ENCODE measurements at regions of chr10 and their contacts with region 1.

Region 1: GRCh38 chr10:94641480-94641879 is 42.0 kb upstream of the CYP2C18 start:
- DNase-seq: no peak
- H3K4me3 ChIP-seq: no peak overlapping the region
- CTCF ChIP-seq: no peak

Region 2: GRCh38 chr10:94630017-94630688 is 11.3 kb before region 1 on chr10:
- CTCF ChIA-PET with region 1: interaction called, 11 read pairs
- POLR2A ChIA-PET with region 1: no interaction called
- DNase-seq: no peak
- H3K4me3 ChIP-seq: no peak overlapping the region
- CTCF ChIP-seq: peak; percentile 40

Region 3: DNA sequence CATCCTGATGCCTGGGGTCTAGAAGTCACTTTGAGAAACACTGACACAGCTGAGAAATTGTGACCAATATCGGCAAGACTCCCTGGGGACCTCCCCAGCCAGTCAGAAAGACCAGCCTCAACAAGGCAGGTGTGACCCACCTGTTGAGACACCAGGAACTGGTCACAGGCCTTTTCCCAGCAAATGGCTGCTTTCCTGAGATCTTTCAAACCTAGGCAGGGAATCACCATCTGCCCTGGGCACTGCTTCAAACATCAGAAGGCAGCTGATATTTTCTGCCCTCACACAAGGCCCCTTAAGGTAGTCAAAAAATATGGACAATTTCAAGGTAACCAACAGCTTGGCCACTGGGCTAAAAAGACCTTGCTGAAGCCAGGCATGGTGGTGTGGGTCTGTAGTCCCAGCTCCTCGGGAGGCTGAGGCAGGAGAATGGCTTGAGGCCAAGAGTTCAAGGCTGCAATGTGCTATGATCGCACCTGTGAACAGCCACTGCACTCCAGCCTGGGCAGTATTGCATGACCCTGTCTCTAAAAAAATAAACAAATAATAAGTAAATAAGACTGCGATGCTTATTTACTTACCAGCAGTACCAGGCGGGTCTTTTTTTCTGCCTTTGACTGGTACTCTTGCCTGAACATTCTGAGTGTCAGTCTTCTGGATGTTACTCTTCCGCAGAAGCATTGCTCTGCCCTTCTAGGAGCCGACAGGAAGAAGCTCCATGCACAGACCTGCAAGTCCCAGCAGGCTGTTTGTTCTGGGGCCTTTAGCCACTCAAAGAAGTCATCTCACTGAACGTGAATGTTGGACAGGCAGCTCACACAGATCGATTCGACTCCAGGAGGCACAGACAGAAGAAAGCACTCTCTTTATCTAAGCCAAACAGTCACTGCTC is 860.0 kb after region 1 on chr10:
- CTCF ChIA-PET with region 1: no interaction called
- POLR2A ChIA-PET with region 1: no interaction called
- DNase-seq: no peak
- H3K4me3 ChIP-seq: no peak overlapping the region
- CTCF ChIP-seq: no peak

Measured in AG04449 (cell line).